ENCODE measurements at regions of chr6 and their contacts with region 1.

Region 1: GRCh38 chr6:34610819-34611477 is 54.8 kb upstream of the SPDEF start:
- DNase-seq: no peak
- ATAC-seq: no peak
- H3K4me3 ChIP-seq: no peak overlapping the region
- H3K27ac ChIP-seq: no peak overlapping the region
- H3K4me1 ChIP-seq: peaks cover 0 to 3% of the 10 kb centered on the region in 2 donors
- H3K27me3 ChIP-seq: no peaks in the 10 kb centered on the region

Region 2: GRCh38 chr6:34425498-34426410 is 185.2 kb before region 1 on chr6 and contains the start of gene RPS10:
- intact Hi-C with region 1: loop called in 1 of 2 experiments (anchors 5 kb)
- DNase-seq: peak; percentile 96 to 98
- ATAC-seq: peak; percentile 99
- H3K4me3 ChIP-seq: peak within 1 kb of the TSS; percentile 3 to 37
- H3K27ac ChIP-seq: peak within 1 kb of the TSS; percentile 0 to 6
- H3K4me1 ChIP-seq: no peaks in the 10 kb centered on the region
- H3K27me3 ChIP-seq: no peaks in the 10 kb centered on the region
- total RNA-seq, gene RPS10: 835 to 876 TPM

Region 3: DNA sequence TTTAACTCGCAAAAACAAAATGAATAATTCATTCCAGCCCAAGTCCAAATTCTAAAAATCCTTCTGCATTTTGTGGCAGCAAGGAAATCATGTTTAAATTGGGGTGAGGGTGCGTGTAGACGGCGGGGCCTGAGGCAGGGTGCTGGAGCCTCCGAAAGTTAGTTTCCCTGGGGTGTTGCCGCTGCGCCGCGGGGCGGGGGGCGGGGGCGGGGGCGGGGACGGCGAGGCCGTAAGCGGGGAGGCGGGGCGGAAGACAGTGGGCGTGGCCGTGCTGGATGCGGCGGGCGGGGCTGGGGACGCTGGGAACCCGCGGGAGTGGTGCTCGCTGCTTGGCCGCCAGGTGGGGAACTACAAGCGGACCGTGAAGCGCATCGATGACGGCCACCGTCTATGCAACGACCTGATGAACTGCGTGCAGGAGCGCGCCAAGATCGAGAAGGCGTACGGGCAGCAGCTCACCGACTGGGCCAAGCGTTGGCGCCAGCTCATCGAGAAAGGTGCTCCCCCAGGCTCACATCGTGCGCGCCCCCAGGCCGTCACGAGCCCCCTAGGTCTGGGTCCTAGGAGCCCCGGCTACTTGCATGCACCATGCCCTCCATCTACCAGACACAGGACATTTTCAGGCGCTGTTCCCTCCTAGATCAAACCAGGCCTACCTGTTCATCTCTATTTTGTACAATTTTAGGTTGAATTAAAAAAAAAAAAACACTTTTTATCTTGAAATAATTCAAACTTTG is 83.8 kb before region 1 on chr6:
- intact Hi-C with region 1: loop called (anchors 1 to 5 kb)
- DNase-seq: peak; percentile 96 to 99
- ATAC-seq: peak; percentile 94
- H3K4me3 ChIP-seq: no peak overlapping the region
- H3K27ac ChIP-seq: no peak overlapping the region
- H3K4me1 ChIP-seq: no peaks in the 10 kb centered on the region
- H3K27me3 ChIP-seq: no peaks in the 10 kb centered on the region

Region 4: GRCh38 chr6:34696739-34697543 is 86.0 kb after region 1 on chr6 and contains the start of gene ILRUN:
- intact Hi-C with region 1: loop called in 1 of 2 experiments (anchors 5 kb)
- DNase-seq: peak; percentile 98 to 99
- ATAC-seq: peak; percentile 97
- H3K4me3 ChIP-seq: peak within 1 kb of the TSS; percentile 89 to 93
- H3K27ac ChIP-seq: peak within 1 kb of the TSS; percentile 59 to 89
- H3K4me1 ChIP-seq: peaks cover 0 to 4% of the 10 kb centered on the region in 2 donors
- H3K27me3 ChIP-seq: no peaks in the 10 kb centered on the region
- total RNA-seq, gene ILRUN: 69.7 to 76.6 TPM

Measured in aorta (tissue), 5 donors.